PC-9 (cell line): ENCODE measurements at regions of chr7 and their contacts with region 1.

Region 1: DNA sequence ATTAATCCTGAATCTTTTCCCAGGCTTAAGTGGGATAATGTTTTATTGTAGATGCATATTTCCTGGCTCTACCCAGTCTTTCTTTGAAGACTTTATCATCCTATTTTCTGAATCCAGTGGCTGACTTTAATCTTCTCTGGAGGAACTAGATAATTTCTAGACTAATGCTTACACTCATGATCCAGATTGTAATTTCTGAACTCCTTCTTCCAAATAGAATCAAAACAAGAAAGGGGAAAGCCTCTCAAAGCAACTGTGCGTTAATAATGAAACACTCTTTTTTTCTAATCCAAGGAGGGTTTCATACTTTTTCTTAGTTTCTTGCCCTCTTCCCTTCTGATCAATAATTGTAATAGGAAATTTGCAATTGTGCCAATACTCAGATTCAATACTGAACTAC is 8.0 kb downstream of the GSTK1 start:
- DNase-seq: no peak
- H3K4me3 ChIP-seq: no peak overlapping the region
- H3K27ac ChIP-seq: no peak overlapping the region
- H3K4me1 ChIP-seq: no peaks in the 10 kb centered on the region
- H3K27me3 ChIP-seq: no peaks in the 10 kb centered on the region
- CTCF ChIP-seq: no peak

Region 2: DNA sequence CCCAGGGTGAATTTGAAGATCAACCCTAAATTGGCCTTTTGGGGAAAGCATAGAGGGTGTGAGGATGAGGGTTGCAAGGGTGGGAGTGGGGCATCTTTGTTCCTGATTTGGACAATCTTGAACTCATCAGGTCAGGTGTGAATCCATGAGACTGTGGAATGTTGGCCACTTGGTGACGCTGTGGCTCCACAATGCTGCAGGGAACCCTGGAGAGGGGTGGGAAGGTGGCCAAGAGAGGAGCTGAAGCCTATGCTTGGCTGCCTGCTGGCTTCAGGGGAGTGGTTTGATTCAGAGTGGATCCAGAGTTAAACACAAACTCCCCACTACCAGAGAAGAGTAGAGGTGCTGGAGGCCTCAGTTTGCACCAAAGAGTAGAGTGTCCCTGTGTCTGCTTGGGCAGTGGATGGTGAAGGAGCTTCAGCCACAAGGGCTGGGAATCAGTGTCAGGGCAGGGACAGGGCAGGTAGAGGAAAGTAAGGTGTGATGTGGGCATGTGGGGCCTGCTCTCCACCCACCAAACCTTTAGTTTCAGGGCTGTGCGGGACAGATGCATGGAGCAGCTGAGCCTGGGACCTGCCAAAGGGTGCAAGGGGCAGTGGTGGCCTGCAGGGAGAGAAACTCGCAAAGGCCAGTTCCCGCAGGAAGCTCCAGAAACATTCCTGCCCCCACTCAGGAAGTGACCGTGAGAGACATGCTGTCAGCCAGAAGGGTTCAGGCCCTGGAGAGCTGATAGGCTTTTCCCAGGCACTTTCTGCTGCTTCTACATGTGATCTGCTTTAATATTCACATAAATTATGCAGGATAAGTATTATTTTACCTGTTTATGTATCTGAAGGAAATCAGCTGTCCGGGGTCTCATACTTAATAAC is 932.4 kb before region 1 on chr7:
- CTCF ChIA-PET with region 1: no interaction called
- POLR2A ChIA-PET with region 1: no interaction called
- intact Hi-C with region 1: no loop called
- DNase-seq: peak; percentile 61 to 88
- H3K4me3 ChIP-seq: no peak overlapping the region
- H3K27ac ChIP-seq: no peak overlapping the region
- H3K4me1 ChIP-seq: no peaks in the 10 kb centered on the region
- H3K27me3 ChIP-seq: no peaks in the 10 kb centered on the region
- CTCF ChIP-seq: peak; percentile 76

Region 3: DNA sequence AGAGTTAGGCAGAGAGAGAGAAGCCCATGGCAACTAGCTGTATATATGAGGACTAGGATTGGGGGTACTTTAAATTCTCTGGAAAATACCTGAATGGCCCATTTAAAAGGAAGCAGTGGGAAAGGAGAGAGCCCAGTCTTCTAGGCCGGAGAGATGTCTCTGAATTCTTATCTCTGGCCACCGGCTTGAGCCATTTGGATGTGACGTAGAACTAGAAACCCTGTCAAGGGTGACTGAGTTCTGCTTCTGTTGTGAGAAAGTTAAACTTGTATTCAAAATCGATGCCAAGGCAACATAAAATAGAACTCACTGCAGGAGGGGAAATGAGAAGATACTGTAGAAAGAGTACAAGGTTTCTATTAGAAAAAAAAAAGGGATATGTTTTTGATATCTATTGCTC is 14.3 kb before region 1 on chr7:
- CTCF ChIA-PET with region 1: no interaction called
- POLR2A ChIA-PET with region 1: interaction called, 11 read pairs
- intact Hi-C with region 1: no loop called
- DNase-seq: no peak
- H3K4me3 ChIP-seq: no peak overlapping the region
- H3K27ac ChIP-seq: no peak overlapping the region
- H3K4me1 ChIP-seq: peaks cover 33% of the 10 kb centered on the region
- H3K27me3 ChIP-seq: no peaks in the 10 kb centered on the region
- CTCF ChIP-seq: no peak